Dorsolateral prefrontal cortex (tissue), 120 donors: ENCODE measurements at regions of chr19 and their contacts with region 1.

Region 1: DNA sequence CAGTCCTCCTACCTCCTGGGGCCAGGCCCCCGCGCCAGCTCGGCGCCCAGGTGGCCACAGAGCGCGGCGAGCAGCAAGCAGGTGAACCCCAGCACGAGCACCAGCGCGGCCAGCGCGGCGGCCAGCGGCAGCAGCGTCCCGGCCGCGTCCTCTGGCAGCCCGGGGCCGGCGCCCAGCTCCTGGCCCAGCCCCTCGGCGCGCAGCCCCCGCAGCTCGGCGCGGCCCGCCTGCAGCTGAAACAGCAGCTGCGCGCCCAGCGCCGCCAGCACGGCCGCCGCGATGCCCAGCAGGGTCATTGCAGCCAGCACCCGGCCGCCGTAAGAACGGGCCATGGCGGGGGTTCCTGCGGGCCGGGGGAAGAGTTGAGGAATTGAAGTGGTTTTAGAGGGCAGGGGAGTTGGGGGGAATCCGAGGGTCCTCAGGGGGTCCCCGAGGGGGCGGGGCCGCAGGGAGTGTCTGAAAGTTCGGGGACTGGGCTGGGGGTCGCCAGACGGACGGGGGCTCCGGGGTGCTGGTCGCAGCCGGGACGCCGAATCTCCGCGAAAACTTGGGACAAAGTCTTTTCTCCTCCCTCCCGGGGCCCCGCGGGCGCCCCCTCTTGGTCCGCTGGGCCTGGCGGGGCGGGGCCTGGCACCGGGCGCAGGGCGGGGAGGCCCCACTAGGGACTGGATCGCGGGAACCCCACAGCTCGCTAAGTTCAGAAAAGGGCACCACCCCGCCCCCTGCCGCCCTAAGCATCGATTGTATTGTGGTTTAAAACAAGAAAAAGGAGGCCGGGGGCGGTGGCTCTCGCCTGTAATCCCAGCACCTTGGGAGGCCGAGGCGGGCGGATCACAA is at the start of gene TMEM221:
- DNase-seq: peak in 1 of 10 donors; percentile 56
- H3K4me3 ChIP-seq: peak within 1 kb of the TSS; percentile 23 to 67 (median 49)
- H3K27ac ChIP-seq: peak within 1 kb of the TSS in 8 of 59 donors; percentile 16 to 55 (median 36)
- H3K27me3 ChIP-seq: no peaks in the 10 kb centered on the region
- CTCF ChIP-seq: peak in 54 of 56 donors; percentile 15 to 66 (median 46)
- total RNA-seq, gene TMEM221: 1.2 to 7.2 (median 4.1) TPM

Region 2: DNA sequence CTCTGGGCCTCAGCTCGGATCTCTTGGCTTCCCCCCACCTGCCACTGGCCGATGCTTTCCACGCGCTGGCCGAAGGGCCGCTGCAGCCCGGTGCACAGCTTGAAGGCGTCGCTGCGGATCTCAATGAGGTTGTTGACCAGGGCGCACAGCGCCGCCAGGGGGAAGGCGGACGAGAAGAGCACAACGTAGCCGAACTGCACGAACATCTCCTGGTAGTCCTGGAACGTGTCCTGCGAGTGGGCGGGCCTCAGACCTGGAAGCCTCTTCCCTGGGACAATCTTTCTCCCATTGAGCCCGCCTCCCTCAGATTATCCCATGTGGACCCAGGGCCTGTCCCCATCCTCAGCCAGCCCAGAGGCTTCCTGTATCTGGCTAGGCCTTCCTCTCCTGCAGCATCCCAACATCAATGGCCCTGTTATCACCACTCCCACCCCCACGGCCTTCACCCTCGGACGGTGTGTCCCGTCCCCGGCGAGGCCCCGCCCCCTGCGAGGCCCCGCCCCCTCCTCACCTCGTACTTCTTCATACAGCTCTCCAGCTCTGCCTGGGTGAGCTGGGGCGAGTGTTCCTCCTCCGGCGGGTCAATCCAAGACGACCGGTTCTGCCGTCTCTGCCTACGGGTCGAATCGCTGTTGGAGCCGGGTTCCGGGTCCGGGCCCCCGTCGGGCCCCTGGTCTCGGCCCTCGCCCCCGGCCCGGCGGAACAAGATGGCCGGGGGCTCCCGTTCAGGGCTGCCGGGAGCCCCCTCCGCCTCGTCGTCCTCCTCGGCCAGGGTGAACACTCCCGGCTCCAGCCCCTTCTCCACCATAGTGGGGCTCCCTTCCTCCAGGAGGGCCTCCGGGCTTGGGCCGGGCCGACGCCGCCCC is 120.5 kb before region 1 on chr19:
- intact Hi-C with region 1: no loop called
- DNase-seq: no peak
- H3K4me3 ChIP-seq: peak overlapping the region in 19 of 59 donors; percentile 4 to 39 (median 21)
- H3K27ac ChIP-seq: peak overlapping the region in 41 of 59 donors; percentile 0 to 85 (median 49)
- H3K27me3 ChIP-seq: no peaks in the 10 kb centered on the region
- CTCF ChIP-seq: no peak

Region 3: GRCh38 chr19:17405250-17406038 is 42.9 kb before region 1 on chr19 and contains the start of gene BST2:
- intact Hi-C with region 1: no loop called
- DNase-seq: peak in 3 of 10 donors; percentile 19 to 53 (median 47)
- H3K4me3 ChIP-seq: peak within 1 kb of the TSS in 58 of 59 donors; percentile 20 to 66 (median 46)
- H3K27ac ChIP-seq: peak within 1 kb of the TSS in 57 of 59 donors; percentile 8 to 90 (median 78)
- H3K27me3 ChIP-seq: peaks cover 0 to 5% (median 0%) of the 10 kb centered on the region in 45 donors
- CTCF ChIP-seq: no peak
- total RNA-seq, gene BST2: 13.1 to 146 (median 26.7) TPM

Region 4: GRCh38 chr19:17570791-17571190 is 122.4 kb after region 1 on chr19:
- intact Hi-C with region 1: loop called (anchors 1 to 5 kb)
- DNase-seq: no peak
- H3K4me3 ChIP-seq: no peak overlapping the region
- H3K27ac ChIP-seq: no peak overlapping the region
- H3K27me3 ChIP-seq: no peaks in the 10 kb centered on the region
- CTCF ChIP-seq: no peak

Region 5: DNA sequence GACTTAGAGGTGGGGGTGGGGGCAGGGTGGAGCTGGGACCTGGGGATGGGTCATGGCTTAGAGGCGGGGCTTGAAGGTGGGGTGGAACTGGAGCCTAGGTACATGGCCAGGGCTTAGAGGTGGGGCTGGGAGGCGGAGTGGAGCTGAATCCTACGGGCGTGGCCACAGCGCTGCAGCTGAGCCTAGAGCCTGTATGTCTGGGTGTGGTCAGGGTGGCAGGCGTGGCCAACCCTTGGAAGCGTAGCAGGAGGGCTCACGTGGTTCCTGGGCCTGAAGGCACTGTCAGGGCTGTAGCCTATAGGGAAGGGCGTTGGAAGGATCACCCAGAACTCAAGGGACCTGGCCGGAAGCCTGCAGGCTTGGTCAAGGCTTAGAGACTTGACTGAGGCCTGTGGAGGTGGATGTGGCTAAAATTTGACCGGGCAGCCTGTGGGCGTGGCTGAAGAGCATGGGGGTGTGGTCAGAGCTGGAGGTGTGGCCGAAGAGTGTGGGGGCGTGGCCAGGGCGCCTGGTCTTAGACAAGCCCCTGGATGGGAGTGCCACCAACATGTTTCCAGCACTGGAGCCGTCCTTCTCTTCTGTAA is 131.4 kb after region 1 on chr19:
- intact Hi-C with region 1: loop called (anchors 1 to 5 kb)
- DNase-seq: no peak
- H3K4me3 ChIP-seq: no peak overlapping the region
- H3K27ac ChIP-seq: peak overlapping the region in 1 of 59 donors; percentile 27
- H3K27me3 ChIP-seq: no peaks in the 10 kb centered on the region
- CTCF ChIP-seq: no peak